ENCODE measurements at regions of chr5 and their contacts with region 1.

Region 1: DNA sequence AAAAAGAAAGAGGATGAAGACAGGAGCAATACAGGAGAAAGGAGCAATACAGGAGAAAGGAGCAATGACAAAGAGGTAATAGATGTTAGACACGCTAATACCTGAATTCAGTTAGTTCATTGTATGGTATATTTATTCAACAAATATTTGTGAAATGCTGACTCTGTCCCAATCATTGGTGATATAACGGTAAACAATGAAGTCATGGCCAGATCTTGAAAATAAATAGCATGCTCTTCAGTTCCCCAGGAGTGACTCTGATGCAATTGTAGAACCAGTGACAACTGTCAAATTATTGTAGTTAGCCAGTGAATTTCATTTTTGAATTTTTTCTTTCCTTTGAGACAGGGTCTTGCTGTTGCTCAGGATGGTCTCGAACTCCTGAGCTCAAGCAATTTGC is 48.0 kb upstream of the SPINK14 start:
- DNase-seq: no peak
- H3K4me3 ChIP-seq: no peak overlapping the region
- H3K27ac ChIP-seq: no peak overlapping the region
- H3K4me1 ChIP-seq: no peaks in the 10 kb centered on the region
- H3K27me3 ChIP-seq: no peaks in the 10 kb centered on the region
- CTCF ChIP-seq: no peak
- POLR2A ChIP-seq: no peak

Region 2: DNA sequence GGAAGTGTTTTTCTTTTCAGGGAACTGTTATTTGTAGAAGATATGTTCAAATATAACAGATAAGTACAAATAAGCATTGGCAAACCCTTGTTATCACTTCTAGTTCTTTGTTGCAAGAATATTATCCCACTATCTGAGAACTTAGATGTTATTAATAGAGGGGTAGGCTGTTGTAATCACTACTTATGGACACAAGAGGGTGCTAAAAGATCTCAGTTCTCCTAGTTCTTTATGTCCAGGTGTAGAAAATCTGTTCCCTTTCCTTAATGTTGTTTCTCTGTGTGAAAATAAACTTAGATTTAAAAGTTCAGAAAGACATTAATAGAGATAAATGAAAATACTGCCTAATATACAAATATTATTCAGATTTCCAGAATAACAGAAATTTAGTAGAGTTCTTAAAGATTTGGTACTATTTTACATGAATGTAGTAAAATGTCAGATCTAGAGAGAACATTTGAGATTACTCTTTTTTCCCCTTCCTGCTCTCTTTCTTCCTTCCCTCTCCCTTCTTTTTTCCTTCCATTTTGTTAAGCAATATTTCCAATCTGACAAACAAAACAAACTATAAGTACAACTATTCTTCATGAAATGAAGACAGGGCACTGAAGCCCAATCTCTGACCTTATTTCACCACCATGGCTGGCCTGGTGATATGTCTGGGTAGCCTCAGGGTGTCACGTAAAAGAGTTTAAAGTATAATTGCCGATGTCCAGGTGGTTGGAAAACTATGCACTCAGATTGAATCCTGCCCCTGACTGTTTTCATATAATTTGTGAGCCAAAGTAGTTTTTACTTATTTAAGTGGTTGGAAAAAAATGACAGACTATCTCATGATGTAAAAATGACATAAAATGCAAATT is 170.4 kb before region 1 on chr5:
- intact Hi-C with region 1: loop called (anchors 5 kb)
- DNase-seq: no peak
- H3K4me3 ChIP-seq: no peak overlapping the region
- H3K27ac ChIP-seq: no peak overlapping the region
- H3K4me1 ChIP-seq: no peaks in the 10 kb centered on the region
- H3K27me3 ChIP-seq: no peaks in the 10 kb centered on the region
- CTCF ChIP-seq: peak; percentile 27 to 83 (median 70)
- POLR2A ChIP-seq: no peak